AG04450 (cell line): ENCODE measurements at regions of chrX and their contacts with region 1.

Region 1: DNA sequence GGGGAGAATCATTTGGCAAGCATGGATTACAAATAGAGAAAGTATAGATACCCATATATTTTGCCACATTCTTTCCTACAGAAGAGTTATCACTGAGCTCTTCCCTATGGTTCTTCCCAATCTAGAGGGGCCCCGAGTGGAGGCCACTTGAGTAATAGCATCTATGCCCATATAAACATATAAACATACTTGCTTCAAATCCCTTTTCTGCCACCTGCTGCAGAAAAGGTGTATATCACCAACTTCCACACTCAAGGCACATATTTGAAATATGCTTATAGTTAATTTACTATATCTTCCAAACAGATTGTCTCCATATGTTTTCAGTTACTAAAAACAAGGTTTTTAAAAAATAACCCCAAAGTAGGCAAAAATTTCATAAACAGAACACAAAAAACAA is 642.8 kb upstream of the DIPK2B start:
- DNase-seq: no peak
- H3K4me3 ChIP-seq: no peak overlapping the region
- H3K27ac ChIP-seq: no peak overlapping the region
- H3K27me3 ChIP-seq: no peaks in the 10 kb centered on the region
- CTCF ChIP-seq: no peak

Region 2: DNA sequence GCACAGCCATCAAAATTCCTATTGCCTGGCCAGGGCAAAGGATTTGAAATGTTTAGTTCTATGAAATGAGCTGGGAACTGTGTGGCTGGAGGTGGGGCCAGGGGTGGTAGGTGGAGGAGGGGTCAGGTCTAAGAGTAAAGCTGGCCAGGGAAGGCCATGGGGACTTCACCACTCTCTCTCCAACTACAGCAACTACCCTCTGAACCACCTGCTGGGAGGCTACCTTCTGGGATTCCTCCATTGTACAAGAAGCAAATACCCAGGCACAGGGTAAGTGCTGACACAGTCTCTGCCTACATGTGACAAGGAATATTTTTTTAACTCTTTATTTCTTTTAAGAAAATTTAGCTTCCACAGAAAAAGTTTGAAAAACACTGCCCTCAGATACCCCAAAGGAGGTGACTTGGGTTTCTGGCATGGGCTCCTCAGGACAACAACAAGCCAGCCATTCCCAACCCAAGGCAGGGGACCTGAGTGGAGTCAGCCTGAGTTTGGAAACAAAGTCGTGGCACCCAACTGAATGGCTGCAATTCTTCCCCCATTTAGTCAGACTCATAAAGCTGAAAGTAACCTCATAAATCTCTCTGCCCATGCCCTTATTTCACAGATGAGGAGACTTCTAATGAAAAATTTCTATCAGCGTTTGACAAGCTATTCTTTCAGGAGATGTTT is 49.1 kb before region 1 on chrX:
- CTCF ChIA-PET with region 1: no interaction called
- POLR2A ChIA-PET with region 1: interaction called, 10 read pairs
- DNase-seq: no peak
- H3K4me3 ChIP-seq: no peak overlapping the region
- H3K27ac ChIP-seq: no peak overlapping the region
- H3K27me3 ChIP-seq: no peaks in the 10 kb centered on the region
- CTCF ChIP-seq: no peak

Region 3: DNA sequence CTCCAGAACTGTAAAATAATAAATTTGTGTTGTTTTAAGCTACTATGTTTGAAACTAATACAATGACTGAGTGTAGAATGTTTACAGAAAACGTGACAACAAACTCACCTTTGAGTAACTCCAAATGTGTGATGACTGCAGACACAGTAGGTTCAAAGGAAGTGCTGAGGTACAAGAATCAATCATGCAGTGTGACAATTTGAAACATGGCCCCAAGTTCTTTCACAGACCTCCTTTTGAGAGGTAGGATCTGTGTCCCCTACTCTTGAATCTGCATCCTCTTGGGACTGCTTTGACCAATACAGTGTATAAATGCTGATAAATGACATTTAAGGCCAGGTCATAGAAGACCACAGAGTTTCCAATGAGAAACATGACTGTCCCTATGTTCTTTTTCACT is 24.9 kb after region 1 on chrX:
- CTCF ChIA-PET with region 1: interaction called, 10 read pairs
- POLR2A ChIA-PET with region 1: no interaction called
- DNase-seq: no peak
- H3K4me3 ChIP-seq: no peak overlapping the region
- H3K27ac ChIP-seq: no peak overlapping the region
- H3K27me3 ChIP-seq: peaks cover 11% of the 10 kb centered on the region
- CTCF ChIP-seq: no peak

Region 4: GRCh38 chrX:45888518-45888917 is 45.0 kb after region 1 on chrX:
- CTCF ChIA-PET with region 1: no interaction called
- POLR2A ChIA-PET with region 1: no interaction called
- DNase-seq: no peak
- H3K4me3 ChIP-seq: no peak overlapping the region
- H3K27ac ChIP-seq: no peak overlapping the region
- H3K27me3 ChIP-seq: no peaks in the 10 kb centered on the region
- CTCF ChIP-seq: no peak

Region 5: DNA sequence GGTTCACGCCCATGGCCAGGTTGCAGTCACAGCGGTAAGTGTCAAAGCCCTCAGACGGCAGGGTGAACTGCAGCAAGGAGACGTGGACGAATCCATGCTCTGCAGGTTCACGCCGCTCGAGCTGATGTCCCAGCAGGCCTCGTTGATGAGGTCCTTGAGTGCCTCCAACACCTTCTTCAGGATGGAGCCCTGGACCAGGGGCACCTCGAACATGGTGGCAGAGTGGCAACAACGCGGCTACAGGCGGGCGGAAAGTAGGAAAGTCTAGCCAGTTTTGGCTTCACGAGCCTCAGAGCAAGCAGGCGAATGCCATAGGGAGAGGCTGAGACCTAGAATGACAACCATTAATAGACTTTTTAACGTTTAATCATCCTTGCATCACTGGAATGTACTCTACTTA is 215.8 kb after region 1 on chrX:
- CTCF ChIA-PET with region 1: no interaction called
- POLR2A ChIA-PET with region 1: no interaction called
- DNase-seq: no peak
- H3K4me3 ChIP-seq: no peak overlapping the region
- H3K27ac ChIP-seq: no peak overlapping the region
- H3K27me3 ChIP-seq: no peaks in the 10 kb centered on the region
- CTCF ChIP-seq: no peak

Region 6: GRCh38 chrX:46260513-46260912 is 417.0 kb after region 1 on chrX:
- CTCF ChIA-PET with region 1: interaction called, 12 read pairs
- POLR2A ChIA-PET with region 1: no interaction called
- DNase-seq: no peak
- H3K4me3 ChIP-seq: no peak overlapping the region
- H3K27ac ChIP-seq: no peak overlapping the region
- H3K27me3 ChIP-seq: no peaks in the 10 kb centered on the region
- CTCF ChIP-seq: no peak